Activated naive CD4-positive, alpha-beta T cell treated with anti-CD3 and anti-CD28 coated beads, Interleukin-2, amount 10 ng/mL, durations not matched to agents 7 days and 5 days (primary cell): ENCODE measurements at regions of chr20 and their contacts with region 1.

Region 1: DNA sequence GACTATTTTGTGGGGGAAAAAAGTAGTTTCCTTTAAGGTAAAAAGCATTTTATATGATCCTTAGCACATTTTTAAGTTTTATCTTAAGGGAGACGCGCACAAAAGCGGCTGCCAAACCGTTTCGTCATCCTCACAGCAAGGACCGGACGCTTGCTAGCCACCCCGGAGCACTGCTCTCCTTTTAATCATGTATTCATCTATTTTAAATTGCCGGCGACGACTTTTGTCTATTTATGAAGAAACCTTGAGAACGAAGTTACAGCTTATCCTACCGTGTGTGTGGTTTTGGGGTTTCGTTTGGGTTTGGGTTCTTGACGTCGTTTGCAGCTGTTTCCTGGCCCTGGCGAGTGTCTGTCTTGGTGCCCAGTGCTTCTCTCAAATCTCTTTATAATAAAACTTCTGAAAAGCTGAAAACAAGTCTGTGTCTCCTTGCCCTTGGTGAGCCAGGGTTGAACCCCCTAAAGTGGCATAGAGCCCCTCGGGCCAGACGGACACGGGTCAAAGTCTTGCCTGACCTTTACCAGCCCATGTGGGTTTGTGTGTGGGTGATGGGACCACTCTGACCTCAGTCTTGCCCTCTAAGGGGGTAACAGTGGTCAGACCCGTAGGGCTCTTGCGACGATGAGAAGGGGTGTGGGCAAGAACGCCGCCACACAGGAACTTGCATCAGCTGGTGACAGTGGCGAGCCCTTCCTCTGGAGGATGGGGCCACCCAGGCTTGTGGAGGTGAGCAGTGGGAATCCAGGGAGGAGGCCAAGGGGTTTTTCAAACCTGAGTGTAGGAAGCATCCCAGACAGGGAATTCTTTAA is 117.6 kb downstream of the JPH2 start:
- DNase-seq: peak; percentile 83
- H3K4me3 Mint-ChIP-seq: peak overlapping the region; percentile 78
- H3K27ac Mint-ChIP-seq: peak overlapping the region; percentile 100
- H3K4me1 Mint-ChIP-seq: peaks cover 73% of the 10 kb centered on the region
- H3K27me3 Mint-ChIP-seq: peaks cover 69% of the 10 kb centered on the region

Region 2: DNA sequence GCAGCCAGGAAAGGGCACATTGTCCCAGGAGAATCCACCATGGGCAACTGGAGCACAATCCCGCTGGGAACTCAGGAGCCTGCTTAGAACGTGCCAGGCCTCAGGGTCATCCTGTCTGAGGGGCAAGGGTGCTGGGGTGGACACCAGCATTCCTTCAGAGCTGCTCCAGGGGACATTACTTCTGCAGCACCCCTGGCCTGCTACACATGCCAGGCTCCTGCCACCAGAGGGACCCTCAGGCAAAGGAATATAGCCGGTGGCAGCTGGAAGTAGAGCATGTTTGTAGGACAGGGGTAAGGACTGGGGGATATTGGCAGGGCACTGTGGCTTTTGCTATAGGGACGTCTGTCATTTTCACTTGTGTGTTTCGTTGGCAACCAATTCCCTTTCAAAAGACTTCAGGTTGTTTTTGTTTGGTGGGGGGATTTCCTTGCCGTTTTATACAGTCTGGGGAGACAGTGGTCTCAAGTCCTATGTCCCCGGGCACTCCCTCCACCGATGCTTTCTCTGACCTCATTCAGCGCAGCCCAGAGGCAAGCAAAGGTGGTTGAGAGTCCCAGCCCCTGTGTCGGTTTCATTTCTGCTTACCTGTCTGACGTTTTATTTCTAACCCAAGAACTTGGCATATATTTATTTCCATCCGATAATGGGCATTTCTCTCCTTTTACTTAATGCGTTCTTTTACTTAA is 13.3 kb before region 1 on chr20:
- CTCF ChIA-PET with region 1: interaction called, 11 read pairs
- DNase-seq: peak; percentile 76
- H3K4me3 Mint-ChIP-seq: no peak overlapping the region
- H3K27ac Mint-ChIP-seq: no peak overlapping the region
- H3K4me1 Mint-ChIP-seq: peaks cover 11% of the 10 kb centered on the region
- H3K27me3 Mint-ChIP-seq: peaks cover 38% of the 10 kb centered on the region

Region 3: GRCh38 chr20:44521484-44522481 is 452.4 kb after region 1 on chr20 and contains the start of gene SERINC3:
- CTCF ChIA-PET with region 1: no interaction called
- DNase-seq: peak; percentile 98
- H3K4me3 Mint-ChIP-seq: peak within 1 kb of the TSS; percentile 72
- H3K27ac Mint-ChIP-seq: peak within 1 kb of the TSS; percentile 95
- H3K4me1 Mint-ChIP-seq: peaks cover 53% of the 10 kb centered on the region
- H3K27me3 Mint-ChIP-seq: peaks cover 7% of the 10 kb centered on the region